Posterior vena cava (tissue), 2 donors: ENCODE measurements at regions of chr7 and their contacts with region 1.

Region 1: DNA sequence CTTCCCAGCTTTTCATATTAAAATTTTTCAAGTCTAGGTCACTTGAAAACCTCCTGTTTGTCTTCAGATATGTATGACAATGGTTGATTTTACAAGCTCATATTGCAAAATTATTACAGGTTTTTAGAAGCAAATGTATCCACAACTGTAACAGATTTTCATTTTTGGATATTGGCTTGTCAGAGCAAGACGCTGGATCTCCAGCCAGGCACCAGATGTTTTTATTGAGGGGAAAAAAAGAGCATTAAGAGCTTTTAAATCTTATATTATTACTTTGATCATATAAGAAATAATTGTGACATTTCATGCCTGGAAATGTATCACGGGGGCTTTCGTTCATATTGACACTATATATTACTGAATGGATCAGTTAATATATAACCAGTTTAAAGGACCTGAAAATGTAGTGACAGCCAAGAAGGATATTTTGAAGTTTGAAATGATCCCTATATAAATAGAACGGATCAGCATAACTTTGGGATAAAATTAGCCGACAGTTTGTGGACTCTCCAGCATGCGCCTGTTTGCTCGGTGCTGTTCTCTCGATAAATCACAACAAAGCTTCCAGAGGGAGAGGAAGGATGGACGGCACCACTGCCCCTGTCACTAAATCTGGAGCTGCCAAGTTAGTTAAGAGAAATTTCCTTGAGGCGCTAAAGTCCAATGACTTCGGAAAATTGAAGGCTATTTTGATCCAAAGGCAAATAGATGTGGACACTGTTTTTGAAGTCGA is at the start of gene ASB4:
- DNase-seq: no peak
- total RNA-seq, gene ASB4: 0.24 TPM in 1 of 2 donors, not detected in the other

Region 2: DNA sequence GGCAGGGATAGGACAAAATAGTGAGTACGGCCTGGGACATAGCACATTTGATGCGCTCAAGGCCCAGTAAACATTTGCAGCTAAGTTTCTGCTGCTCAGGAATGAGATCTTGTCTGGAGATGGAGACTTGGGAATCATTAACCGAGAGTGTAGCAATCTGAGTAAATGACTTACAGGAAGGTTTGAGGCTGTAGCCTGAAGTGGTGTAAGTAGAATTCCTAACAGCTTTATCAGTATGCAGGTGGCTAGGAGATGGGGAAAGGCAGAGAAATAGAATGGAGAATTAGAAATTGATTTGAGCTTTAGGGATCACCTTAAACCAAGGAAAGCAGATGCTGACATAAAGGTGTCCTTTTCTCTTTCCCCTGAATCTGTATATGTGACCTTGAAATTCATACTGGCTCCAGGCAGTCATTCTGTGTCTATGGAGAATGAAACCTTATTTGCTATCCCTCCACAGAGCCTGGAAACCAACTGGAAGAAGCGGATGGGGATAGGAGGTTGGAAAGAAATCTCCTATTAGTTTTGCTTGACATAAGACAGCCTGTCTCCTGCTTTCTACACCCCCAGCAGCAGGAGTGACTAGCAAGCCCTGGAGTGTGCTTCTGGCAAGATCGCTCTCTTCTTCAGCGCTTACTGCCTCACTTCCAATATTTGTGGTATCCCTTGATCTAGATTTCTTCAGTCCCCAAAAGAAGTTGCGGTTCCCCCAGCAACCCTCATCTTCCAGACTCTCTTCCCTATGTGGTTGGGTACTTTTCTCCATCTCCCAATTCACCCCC is 44.3 kb before region 1 on chr7:
- intact Hi-C with region 1: no loop called
- DNase-seq: no peak

Region 3: GRCh38 chr7:96495751-96496216 is 1010.2 kb after region 1 on chr7:
- intact Hi-C with region 1: no loop called
- DNase-seq: no peak

Region 4: DNA sequence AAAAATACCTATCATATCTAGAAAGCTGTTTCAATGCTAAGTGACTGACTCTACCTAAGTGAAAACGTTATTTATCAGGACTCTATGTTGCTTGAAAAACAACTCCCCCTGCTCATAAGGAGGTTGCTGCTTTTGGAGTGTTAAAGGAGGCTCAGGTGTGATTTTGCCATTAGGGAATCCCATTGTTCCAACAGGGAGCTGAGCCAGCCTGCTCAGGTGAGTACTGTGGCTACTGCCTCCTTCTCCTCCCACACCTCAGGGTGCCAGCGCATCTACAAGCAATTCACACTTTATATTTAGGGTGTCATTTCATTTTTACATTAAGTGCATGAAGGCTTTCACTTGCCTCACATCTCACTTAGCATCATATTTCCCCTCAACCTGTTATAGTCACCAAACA is 1139.4 kb after region 1 on chr7:
- intact Hi-C with region 1: loop called in 1 of 2 experiments (anchors 5 kb)
- DNase-seq: no peak

Region 5: DNA sequence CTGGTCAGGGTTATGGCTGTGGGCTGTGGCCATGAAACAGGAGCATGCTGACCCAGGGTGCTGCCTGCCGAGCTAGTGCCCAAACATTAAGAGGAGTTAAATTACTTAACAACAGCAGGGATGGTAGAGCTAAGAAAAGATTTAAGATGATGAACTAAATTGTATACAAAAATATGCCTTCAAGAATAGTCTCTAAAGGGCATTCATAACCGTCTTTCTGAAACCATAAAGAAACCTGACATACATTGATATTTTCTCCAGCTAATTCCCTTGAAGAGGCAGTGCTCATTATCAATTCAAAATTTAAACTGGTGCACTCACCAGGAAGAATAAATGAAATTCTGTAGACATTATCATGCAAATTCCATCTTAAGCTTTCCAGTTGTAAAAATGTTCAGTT is 1980.5 kb after region 1 on chr7:
- intact Hi-C with region 1: no loop called
- DNase-seq: no peak